Activated CD4-positive, alpha-beta memory T cell treated with anti-CD3 and anti-CD28 coated beads, Interleukin-2, amount 10 ng/mL, durations not matched to agents 7 days and 5 days (primary cell): ENCODE measurements at regions of chr16 and their contacts with region 1.

Region 1: DNA sequence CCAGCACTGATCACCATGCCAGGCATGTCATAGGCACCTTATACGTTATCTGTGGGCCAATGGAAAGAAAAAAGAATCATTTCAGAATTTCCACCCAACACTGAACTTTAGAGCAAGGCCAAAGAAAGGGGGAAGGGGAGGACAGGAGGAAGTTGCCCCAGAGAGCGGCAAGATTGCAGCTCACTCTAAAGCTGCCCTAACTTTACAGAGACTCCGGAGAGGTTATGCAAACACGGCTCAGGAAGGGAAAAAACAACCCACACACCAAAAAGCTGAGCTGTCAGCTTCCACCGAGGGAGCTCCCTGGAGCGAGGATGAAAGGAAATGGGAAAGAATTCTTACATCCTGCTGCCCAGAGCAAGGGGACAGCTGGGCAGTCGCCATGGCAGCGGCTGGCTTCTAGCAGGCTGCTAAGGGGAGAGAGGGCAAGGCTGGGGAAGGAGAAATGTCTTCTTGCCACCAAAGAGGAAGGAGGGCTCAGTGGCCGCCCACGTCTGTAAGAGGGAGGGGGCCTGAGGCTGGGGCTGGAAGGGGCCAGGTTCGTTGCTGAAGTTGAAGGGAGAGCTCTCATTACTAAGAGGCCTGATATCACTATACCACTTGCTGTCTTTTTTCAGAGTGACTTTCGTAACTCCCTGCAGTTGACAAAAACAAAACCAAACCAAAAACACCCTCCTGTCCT is 18.2 kb downstream of the COTL1 start:
- DNase-seq: peak; percentile 59
- H3K4me3 Mint-ChIP-seq: peak overlapping the region; percentile 73
- H3K27ac Mint-ChIP-seq: peak overlapping the region; percentile 96
- H3K4me1 Mint-ChIP-seq: peaks cover 93% of the 10 kb centered on the region
- H3K27me3 Mint-ChIP-seq: no peaks in the 10 kb centered on the region

Region 2: GRCh38 chr16:84582958-84583516 is 16.6 kb before region 1 on chr16:
- CTCF ChIA-PET with region 1: interaction called, 3 read pairs
- POLR2A ChIA-PET with region 1: interaction called, 27 read pairs
- DNase-seq: no peak
- H3K4me3 Mint-ChIP-seq: no peak overlapping the region
- H3K27ac Mint-ChIP-seq: peak overlapping the region; percentile 42
- H3K4me1 Mint-ChIP-seq: peaks cover 47% of the 10 kb centered on the region
- H3K27me3 Mint-ChIP-seq: no peaks in the 10 kb centered on the region

Region 3: DNA sequence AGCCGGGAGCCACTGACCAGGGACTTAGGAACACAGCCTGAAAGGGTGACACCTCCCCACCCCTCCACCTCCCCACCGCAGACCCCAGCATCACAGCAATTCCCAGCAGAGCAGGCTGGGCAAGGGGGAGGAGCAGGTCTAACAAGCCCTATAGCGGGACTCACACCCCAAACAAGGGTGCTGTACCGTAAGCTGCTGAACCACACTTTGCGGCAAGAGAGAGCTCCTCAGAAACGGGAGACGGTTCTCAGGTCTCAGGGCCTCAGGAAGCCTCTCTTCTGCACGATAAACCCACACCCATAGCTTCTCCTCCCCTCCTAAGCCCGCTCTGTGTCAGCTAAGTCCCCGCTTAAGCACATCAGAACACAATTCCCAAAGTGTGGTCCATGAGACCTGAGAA is 29.9 kb after region 1 on chr16:
- CTCF ChIA-PET with region 1: no interaction called
- POLR2A ChIA-PET with region 1: no interaction called
- DNase-seq: no peak
- H3K4me3 Mint-ChIP-seq: no peak overlapping the region
- H3K27ac Mint-ChIP-seq: no peak overlapping the region
- H3K4me1 Mint-ChIP-seq: peaks cover 24% of the 10 kb centered on the region
- H3K27me3 Mint-ChIP-seq: peaks cover 43% of the 10 kb centered on the region